HEK293T (cell line): ENCODE measurements at regions of chr5 and their contacts with region 1.

Region 1: DNA sequence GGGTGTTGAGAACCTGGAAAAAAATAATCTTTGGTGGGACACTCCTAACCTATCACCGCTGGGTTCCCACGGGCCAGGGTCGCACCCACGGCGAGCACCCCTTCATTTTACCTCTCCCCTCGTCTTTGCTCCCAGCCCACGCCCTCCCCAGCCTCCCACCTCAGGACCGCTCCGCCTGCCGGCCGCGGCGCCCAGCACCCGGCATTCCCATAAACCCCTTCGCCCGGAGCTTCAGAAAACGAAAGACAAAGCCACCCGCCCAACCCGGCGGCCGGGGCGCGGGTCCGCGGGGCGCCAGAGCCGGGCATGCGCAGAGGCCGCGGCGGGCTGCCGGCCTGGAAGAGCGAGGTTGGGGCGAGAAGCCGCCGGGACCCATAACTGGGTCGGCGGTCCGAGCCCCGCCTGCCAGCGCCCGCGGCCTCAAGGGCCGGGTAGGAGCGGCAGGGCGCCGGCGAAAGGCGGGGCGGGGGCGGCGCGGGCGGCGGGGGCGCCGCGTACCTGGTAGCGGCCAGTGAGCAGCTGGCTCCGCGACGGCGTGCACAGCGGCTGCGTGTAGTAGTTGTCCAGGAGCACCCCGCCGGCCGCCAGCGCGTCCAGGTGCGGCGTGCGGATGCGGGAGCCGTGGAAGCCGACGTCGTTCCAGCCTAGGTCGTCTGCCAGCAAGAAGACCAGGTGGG is 533 bp downstream of the ARSB start:
- DNase-seq: peak; percentile 90

Region 2: GRCh38 chr5:78779771-78780616 is 204.6 kb before region 1 on chr5:
- CTCF ChIA-PET with region 1: no interaction called
- POLR2A ChIA-PET with region 1: no interaction called
- DNase-seq: peak; percentile 37

Region 3: GRCh38 chr5:78908173-78909061 is 76.2 kb before region 1 on chr5:
- CTCF ChIA-PET with region 1: interaction called, 4 read pairs
- POLR2A ChIA-PET with region 1: interaction called, 10 read pairs
- DNase-seq: peak; percentile 76

Region 4: DNA sequence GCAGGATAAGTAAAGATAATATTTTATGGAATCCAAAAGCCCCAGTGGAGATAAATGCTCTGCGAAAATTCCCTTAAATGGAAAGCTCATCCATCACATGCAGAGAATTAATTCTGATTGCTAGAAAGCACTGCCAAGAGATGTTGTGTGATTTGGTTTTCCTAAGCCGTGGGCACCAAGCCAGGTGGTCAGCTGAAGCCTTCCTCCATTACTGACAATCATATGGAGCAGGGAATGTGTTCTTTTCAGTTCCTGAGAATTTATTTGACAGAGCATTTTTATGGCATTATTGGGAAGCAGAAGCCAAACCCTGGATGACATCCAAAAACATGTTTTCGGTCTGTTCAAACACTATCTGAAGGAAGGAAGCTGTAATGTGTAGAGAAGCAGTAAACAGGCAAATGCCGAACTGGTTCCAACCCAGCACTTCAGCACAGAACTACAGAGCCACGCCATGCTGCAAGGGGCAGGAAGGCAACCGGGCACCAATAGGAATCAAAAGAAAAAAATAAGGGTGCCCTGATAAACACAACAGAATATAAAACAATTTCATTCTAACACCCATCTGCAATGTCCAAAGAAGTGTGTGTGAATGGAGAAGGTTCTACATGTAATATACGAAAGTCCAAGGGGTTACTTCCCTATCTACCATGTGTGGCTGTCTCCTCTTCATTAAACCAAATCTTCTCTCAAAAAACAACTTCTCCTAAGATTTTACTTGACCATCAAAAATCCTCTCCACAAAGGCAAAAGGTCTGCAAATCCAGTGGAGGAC is 11.7 kb before region 1 on chr5:
- CTCF ChIA-PET with region 1: interaction called, 3 read pairs
- POLR2A ChIA-PET with region 1: interaction called, 21 read pairs
- DNase-seq: no peak